HCT116 (cell line): ENCODE measurements at regions of chr2 and their contacts with region 1.

Region 1: GRCh38 chr2:37653805-37654378 is 17.6 kb downstream of the CDC42EP3 start:
- DNase-seq: no peak
- ATAC-seq: no peak
- H3K4me3 ChIP-seq: no peak overlapping the region
- H3K27ac ChIP-seq: peak overlapping the region; percentile 25
- H3K4me1 ChIP-seq: peaks cover 21 to 60% of the 10 kb centered on the region in 2 experiments
- H3K27me3 ChIP-seq: no peaks in the 10 kb centered on the region
- CTCF ChIP-seq: no peak
- POLR2A ChIP-seq: no peak
- RAD21 ChIP-seq: no peak

Region 2: DNA sequence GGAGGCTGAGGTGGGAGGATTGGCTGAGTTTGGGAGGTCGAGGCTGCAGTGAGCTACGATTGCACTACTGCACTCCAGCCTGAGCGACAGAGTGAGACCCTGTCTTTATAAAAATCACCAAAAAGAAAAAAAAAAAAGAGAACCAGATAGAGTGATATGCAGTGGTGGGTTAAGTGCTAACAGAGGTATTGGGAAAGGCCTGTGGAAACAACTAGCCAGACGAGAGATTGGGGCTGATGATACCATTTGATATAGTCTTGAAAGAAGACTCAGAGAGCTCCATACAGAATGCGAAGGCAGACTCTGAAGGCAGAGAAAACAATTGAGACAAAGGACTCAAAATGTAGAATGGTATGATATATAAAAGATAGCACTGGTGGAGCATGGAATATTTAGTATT is 116.6 kb before region 1 on chr2:
- CTCF ChIA-PET with region 1: no interaction called
- POLR2A ChIA-PET with region 1: no interaction called
- RAD21 ChIA-PET with region 1: no interaction called
- intact Hi-C with region 1: loop called (anchors 5 kb)
- DNase-seq: no peak
- ATAC-seq: no peak
- H3K4me3 ChIP-seq: no peak overlapping the region
- H3K27ac ChIP-seq: no peak overlapping the region
- H3K4me1 ChIP-seq: peaks cover 9 to 21% of the 10 kb centered on the region in 2 experiments; a peak in 3 of 4 replicates
- H3K27me3 ChIP-seq: no peaks in the 10 kb centered on the region
- CTCF ChIP-seq: no peak
- POLR2A ChIP-seq: no peak
- RAD21 ChIP-seq: no peak